ENCODE measurements at regions of chr11 and their contacts with region 1.

Region 1: GRCh38 chr11:122108192-122108799 is 7.7 kb downstream of the BLID start:
- DNase-seq: no peak

Region 2: GRCh38 chr11:121930004-121930965 is 178.0 kb before region 1 on chr11:
- intact Hi-C with region 1: loop called (anchors 10 kb)
- DNase-seq: no peak

Region 3: GRCh38 chr11:122189229-122189628 is 80.9 kb after region 1 on chr11:
- intact Hi-C with region 1: loop called (anchors 5 kb)
- DNase-seq: no peak

Region 4: GRCh38 chr11:122655527-122656072 is 547.3 kb after region 1 on chr11 and contains the start of gene UBASH3B:
- intact Hi-C with region 1: no loop called
- DNase-seq: peak; percentile 92
- total RNA-seq, gene UBASH3B: 4.2 TPM

Measured in cardiac septum (tissue), 1 donor.